Heart right ventricle (tissue), 16 donors: ENCODE measurements at regions of chr17 and their contacts with region 1.

Region 1: GRCh38 chr17:5065227-5065744 is 13.0 kb upstream of the ZFP3 start:
- DNase-seq: no peak
- ATAC-seq: no peak
- H3K4me3 ChIP-seq: no peak overlapping the region
- H3K27ac ChIP-seq: no peak overlapping the region
- H3K4me1 ChIP-seq: no peaks in the 10 kb centered on the region
- H3K27me3 ChIP-seq: peaks cover 0 to 4% (median 0%) of the 10 kb centered on the region in 7 donors
- CTCF ChIP-seq: no peak

Region 2: DNA sequence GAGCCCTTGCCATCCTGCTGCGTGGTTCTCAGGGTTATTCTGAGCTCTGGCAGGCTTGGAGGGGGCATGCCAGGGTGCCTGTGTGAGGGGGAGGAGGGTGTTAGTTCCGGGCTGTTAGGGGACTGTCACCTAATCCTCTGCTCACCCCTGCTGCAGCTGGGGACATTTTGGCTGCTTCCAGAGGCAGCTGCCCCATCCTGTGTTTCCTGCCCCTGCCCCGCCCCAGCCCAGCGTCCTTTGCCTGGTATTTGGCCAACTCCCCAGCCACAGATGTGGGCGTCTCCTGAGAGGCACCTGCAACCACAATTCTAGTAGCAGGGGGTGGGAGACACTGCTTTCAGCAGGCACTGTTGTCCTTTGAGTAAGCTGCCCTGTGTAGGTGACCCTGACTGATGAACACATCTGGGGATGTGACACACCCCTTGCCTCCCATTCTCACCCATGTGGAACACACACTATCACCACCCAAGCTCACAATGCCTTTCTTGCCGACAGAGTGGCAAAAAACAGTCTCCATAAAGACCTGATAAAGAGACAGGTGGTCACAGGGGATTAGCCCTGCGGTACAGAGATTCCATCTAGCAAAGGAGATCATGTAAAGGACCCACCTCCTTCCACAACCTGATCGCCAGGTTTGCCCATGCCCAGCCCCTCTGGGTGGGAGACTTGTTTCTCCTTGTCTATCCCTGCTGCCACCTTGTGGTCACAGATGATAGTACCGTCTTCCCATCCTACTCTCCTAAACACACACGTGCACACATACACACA is 162.1 kb before region 1 on chr17 and contains the start of gene CHRNE:
- intact Hi-C with region 1: loop called in 8 of 10 experiments (anchors 2 to 5 kb)
- DNase-seq: peak in 1 of 2 donors; percentile 81
- ATAC-seq: peak in 3 of 8 donors; percentile 29 to 40 (median 37)
- H3K4me3 ChIP-seq: peak within 1 kb of the TSS in 4 of 10 donors; percentile 13 to 53 (median 20)
- H3K27ac ChIP-seq: peak within 1 kb of the TSS in 9 of 10 donors; percentile 25 to 71 (median 59)
- H3K4me1 ChIP-seq: peaks cover 0 to 49% (median 34%) of the 10 kb centered on the region in 9 donors
- H3K27me3 ChIP-seq: peaks cover 0 to 36% (median 21%) of the 10 kb centered on the region in 7 donors
- CTCF ChIP-seq: peak; percentile 50 to 88 (median 77)
- total RNA-seq, gene CHRNE: 0.19 to 1.6 (median 0.53) TPM

Region 3: GRCh38 chr17:4913994-4914393 is 151.3 kb before region 1 on chr17:
- intact Hi-C with region 1: loop called in 9 of 10 experiments (anchors 2 to 10 kb)
- DNase-seq: no peak
- ATAC-seq: no peak
- H3K4me3 ChIP-seq: no peak overlapping the region
- H3K27ac ChIP-seq: no peak overlapping the region
- H3K4me1 ChIP-seq: peaks cover 0 to 9% (median 6%) of the 10 kb centered on the region in 9 donors
- H3K27me3 ChIP-seq: no peaks in the 10 kb centered on the region
- CTCF ChIP-seq: no peak

Region 4: GRCh38 chr17:4980644-4981216 is 84.6 kb before region 1 on chr17:
- intact Hi-C with region 1: loop called in 7 of 10 experiments (anchors 1 to 5 kb)
- DNase-seq: no peak
- ATAC-seq: peak; percentile 15 to 65 (median 54)
- H3K4me3 ChIP-seq: no peak overlapping the region
- H3K27ac ChIP-seq: peak overlapping the region in 1 of 10 donors; percentile 78
- H3K4me1 ChIP-seq: peaks cover 0 to 50% (median 6%) of the 10 kb centered on the region in 9 donors
- H3K27me3 ChIP-seq: no peaks in the 10 kb centered on the region
- CTCF ChIP-seq: peak; percentile 61 to 78 (median 74)

Region 5: GRCh38 chr17:5031365-5032082 is 33.8 kb before region 1 on chr17:
- intact Hi-C with region 1: loop called in 6 of 10 experiments (anchors 1 to 5 kb)
- DNase-seq: peak; percentile 77 to 79
- ATAC-seq: peak; percentile 48 to 87 (median 80)
- H3K4me3 ChIP-seq: peak overlapping the region in 9 of 10 donors; percentile 28 to 56 (median 49)
- H3K27ac ChIP-seq: peak overlapping the region in 7 of 10 donors; percentile 1 to 80 (median 40)
- H3K4me1 ChIP-seq: peaks cover 0 to 24% (median 11%) of the 10 kb centered on the region in 9 donors
- H3K27me3 ChIP-seq: peaks cover 0 to 19% (median 6%) of the 10 kb centered on the region in 7 donors
- CTCF ChIP-seq: peak; percentile 69 to 83 (median 79)